T-cell (primary cell): ENCODE measurements at regions of chr9 and their contacts with region 1.

Region 1: GRCh38 chr9:72173081-72173480 is 23.8 kb downstream of the GDA start:
- DNase-seq: no peak
- ATAC-seq: no peak
- H3K4me3 ChIP-seq: no peak overlapping the region
- H3K4me3 Mint-ChIP-seq: no peak overlapping the region
- H3K27ac ChIP-seq: no peak overlapping the region
- H3K27ac Mint-ChIP-seq: no peak overlapping the region
- H3K4me1 ChIP-seq: no peaks in the 10 kb centered on the region
- H3K4me1 Mint-ChIP-seq: no peaks in the 10 kb centered on the region
- H3K27me3 ChIP-seq: no peaks in the 10 kb centered on the region
- H3K27me3 Mint-ChIP-seq: peaks cover 2 to 7% of the 10 kb centered on the region in 2 donors

Region 2: DNA sequence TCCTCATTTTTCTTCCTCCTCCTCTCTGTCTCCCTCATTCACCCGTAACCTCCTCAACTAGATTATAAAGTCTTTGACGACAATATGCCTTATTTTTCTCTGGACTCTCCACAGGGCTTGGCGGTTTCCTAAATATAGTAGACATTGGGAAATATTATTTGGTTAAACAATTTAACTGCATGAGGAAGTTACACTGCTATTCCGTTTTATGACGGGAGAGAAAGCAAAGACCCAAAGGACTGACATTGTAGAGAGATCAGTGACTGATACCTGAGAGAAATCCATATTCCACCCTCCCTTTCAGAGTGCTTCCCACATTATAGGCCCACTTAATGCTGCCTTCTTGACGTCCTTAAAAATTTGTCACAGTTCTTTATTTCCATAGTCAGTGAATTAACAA is 27.4 kb after region 1 on chr9:
- CTCF ChIA-PET with region 1: interaction called in 1 of 2 experiments, 10 read pairs
- POLR2A ChIA-PET with region 1: no interaction called
- DNase-seq: no peak
- ATAC-seq: no peak
- H3K4me3 ChIP-seq: no peak overlapping the region
- H3K4me3 Mint-ChIP-seq: no peak overlapping the region
- H3K27ac ChIP-seq: no peak overlapping the region
- H3K27ac Mint-ChIP-seq: no peak overlapping the region
- H3K4me1 ChIP-seq: no peaks in the 10 kb centered on the region
- H3K4me1 Mint-ChIP-seq: no peaks in the 10 kb centered on the region
- H3K27me3 ChIP-seq: peaks cover 0 to 3% of the 10 kb centered on the region in 2 experiments
- H3K27me3 Mint-ChIP-seq: peaks cover 2 to 3% of the 10 kb centered on the region in 2 donors